CD4-positive, alpha-beta memory T cell (primary cell): ENCODE measurements at regions of chr17 and their contacts with region 1.

Region 1: DNA sequence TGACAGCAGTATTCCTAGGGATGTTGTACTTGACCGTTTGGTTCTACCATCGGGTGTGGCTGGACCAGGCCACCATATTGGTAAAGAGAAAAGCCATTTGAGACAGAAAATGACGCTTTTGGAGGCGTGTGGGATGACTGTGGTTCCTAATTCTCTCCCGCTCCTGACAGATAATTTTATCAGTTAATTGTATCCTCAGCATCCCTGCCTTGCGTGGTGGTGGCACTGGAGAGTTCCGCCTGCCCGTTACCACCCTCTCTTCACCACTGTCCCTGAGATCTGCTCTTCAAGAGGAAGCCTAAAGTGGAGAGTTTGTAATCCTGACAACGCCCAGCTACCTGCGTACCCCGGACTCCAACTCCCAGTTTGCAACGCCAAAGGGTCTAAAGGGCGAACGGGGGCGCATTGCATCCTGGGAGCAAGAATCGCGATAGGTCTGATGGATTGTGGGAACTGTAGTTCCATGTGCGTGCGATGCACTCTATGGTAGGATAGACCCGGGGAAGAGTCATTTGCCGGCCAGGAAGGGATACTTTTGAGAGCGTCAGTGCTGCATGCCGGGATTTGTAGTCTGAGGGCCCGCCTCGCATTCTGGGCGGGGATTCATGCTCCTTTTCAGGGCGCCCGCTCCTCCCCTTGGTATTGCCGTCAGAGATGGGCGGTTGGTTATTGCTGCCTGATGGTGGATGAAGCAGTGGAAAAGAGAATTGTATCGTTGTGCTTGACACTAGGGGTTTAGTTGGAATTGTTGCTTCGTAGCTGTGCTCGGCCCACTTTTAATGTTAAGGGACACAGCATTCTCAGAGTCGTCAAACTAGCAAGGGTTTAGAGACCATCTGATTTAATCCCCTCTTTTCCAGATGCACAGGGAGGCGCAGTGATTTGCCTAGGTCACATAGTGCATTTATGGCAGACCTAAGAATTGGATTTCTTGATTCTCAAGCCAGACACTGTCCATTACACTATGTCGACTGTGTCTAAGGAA is 965 bp upstream of the PHF12 start:
- DNase-seq: peak; percentile 94 to 99 (median 99)
- H3K4me3 ChIP-seq: peak overlapping the region; percentile 86 to 92
- H3K4me3 Mint-ChIP-seq: no peak overlapping the region
- H3K27ac ChIP-seq: peak overlapping the region; percentile 86
- H3K27ac Mint-ChIP-seq: no peak overlapping the region
- H3K4me1 ChIP-seq: peaks cover 29% of the 10 kb centered on the region
- H3K4me1 Mint-ChIP-seq: peaks cover 12 to 20% (median 18%) of the 10 kb centered on the region in 4 donors
- H3K27me3 ChIP-seq: no peaks in the 10 kb centered on the region
- H3K27me3 Mint-ChIP-seq: no peaks in the 10 kb centered on the region

Region 2: GRCh38 chr17:28710861-28711722 is 241.2 kb before region 1 on chr17:
- CTCF ChIA-PET with region 1: interaction called, 5 read pairs
- POLR2A ChIA-PET with region 1: interaction called, 22 read pairs
- intact Hi-C with region 1: no loop called
- DNase-seq: peak; percentile 85 to 88 (median 87)
- H3K4me3 ChIP-seq: peak overlapping the region; percentile 63 to 69
- H3K4me3 Mint-ChIP-seq: peak overlapping the region; percentile 91 to 95 (median 94)
- H3K27ac ChIP-seq: peak overlapping the region; percentile 85
- H3K27ac Mint-ChIP-seq: peak overlapping the region; percentile 92 to 97 (median 96)
- H3K4me1 ChIP-seq: peaks cover 13% of the 10 kb centered on the region
- H3K4me1 Mint-ChIP-seq: peaks cover 13 to 30% (median 20%) of the 10 kb centered on the region in 4 donors
- H3K27me3 ChIP-seq: peaks cover 7% of the 10 kb centered on the region
- H3K27me3 Mint-ChIP-seq: peaks cover 4 to 11% of the 10 kb centered on the region in 2 donors

Region 3: DNA sequence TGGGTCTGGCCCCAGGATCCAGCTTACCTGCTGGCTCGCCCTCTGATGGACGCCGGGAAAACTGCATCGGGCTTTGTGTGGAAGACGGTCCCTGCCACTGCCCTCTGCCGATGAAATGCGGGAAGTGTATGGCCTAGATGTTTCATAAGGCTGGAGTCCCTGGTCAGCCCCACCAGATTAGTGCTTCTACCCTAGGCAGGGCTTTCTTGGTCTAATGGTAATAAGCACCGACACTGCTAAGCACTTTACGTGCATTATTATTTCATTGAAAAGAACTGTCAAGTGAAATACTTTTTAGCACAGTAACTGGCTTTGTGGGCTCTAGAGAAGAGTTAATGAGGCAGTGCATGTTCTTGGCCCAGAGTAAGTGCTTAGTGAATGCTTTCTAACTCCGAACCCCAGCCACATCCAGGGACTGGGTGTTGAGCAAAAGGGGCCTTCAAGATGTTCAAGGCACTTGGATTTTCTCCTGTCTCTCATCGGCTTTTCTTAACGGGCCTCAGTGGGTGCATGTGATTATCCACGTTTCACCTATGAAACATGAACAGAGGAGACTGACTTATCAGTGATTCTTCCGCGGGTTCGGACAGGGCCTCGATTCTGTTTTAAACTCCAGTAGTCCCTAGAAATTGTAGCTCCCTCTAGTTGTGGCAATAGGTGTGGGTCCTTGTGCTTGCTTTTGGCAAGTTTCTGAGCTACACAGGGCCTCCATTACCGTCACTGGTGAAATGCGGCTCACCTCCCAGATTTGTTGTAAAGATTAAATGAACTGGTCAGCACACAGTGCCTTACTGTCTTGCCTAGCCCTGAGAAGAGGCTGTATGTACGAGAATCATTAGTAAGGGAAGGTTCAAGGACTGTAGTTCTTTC is 201.9 kb before region 1 on chr17:
- CTCF ChIA-PET with region 1: interaction called, 14 read pairs
- POLR2A ChIA-PET with region 1: interaction called, 13 read pairs
- intact Hi-C with region 1: no loop called
- DNase-seq: peak; percentile 82 to 89 (median 85)
- H3K4me3 ChIP-seq: no peak overlapping the region
- H3K4me3 Mint-ChIP-seq: peak overlapping the region in 1 of 8 donors; percentile 49
- H3K27ac ChIP-seq: peak overlapping the region; percentile 10
- H3K27ac Mint-ChIP-seq: peak overlapping the region in 6 of 7 donors; percentile 17 to 85 (median 70)
- H3K4me1 ChIP-seq: peaks cover 13% of the 10 kb centered on the region
- H3K4me1 Mint-ChIP-seq: peaks cover 7 to 18% (median 11%) of the 10 kb centered on the region in 4 donors
- H3K27me3 ChIP-seq: no peaks in the 10 kb centered on the region
- H3K27me3 Mint-ChIP-seq: no peaks in the 10 kb centered on the region

Region 4: DNA sequence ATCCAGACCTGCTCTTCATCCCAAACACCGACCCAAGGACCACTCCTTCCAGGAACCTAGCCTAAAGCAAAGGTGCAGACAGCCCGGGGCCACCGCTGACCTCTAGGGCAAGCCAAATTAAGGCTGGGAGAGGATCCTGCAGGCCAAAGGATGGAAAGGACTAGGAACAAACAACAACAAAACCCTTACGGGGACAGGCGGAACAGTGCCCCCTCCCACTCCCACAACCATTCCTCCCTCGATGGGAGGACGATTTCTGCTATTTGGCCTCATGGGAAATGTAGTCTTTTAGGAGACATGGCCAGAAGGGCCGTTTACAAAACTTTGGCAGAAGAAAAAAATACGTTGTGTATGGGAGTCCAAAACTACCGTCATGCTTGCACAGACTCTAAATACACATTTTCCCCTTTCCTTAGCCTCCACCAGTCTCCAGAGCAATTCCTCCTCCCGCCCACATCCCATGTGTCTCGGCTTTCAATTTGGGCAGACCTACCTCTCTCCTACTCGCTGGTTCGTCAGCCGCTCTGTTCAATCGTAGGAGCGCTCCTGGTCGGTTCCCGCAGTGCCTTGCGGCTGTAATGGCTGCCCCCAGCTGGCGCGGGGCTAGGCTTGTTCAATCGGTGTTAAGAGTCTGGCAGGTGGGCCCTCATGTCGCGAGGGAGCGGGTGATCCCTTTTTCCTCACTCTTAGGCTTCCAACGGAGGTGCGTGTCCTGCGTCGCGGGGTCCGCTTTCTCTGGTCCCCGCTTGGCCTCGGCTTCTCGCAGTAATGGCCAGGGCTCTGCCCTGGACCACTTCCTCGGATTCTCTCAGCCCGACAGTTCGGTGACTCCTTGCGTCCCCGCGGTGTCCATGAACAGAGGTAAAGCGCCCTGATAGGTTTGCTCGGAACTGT is 97.6 kb before region 1 on chr17 and contains the start of gene ERAL1:
- CTCF ChIA-PET with region 1: interaction called, 7 read pairs
- POLR2A ChIA-PET with region 1: no interaction called
- intact Hi-C with region 1: loop called (anchors 1 kb)
- DNase-seq: peak; percentile 82 to 90 (median 85)
- H3K4me3 ChIP-seq: peak within 1 kb of the TSS; percentile 88 to 91
- H3K4me3 Mint-ChIP-seq: peak within 1 kb of the TSS; percentile 90 to 98 (median 95)
- H3K27ac ChIP-seq: peak within 1 kb of the TSS; percentile 73
- H3K27ac Mint-ChIP-seq: peak within 1 kb of the TSS; percentile 82 to 96 (median 94)
- H3K4me1 ChIP-seq: peaks cover 13% of the 10 kb centered on the region
- H3K4me1 Mint-ChIP-seq: peaks cover 4 to 19% (median 11%) of the 10 kb centered on the region in 4 donors
- H3K27me3 ChIP-seq: no peaks in the 10 kb centered on the region
- H3K27me3 Mint-ChIP-seq: no peaks in the 10 kb centered on the region
- total RNA-seq, gene ERAL1: 23.5 to 24.3 TPM

Region 5: DNA sequence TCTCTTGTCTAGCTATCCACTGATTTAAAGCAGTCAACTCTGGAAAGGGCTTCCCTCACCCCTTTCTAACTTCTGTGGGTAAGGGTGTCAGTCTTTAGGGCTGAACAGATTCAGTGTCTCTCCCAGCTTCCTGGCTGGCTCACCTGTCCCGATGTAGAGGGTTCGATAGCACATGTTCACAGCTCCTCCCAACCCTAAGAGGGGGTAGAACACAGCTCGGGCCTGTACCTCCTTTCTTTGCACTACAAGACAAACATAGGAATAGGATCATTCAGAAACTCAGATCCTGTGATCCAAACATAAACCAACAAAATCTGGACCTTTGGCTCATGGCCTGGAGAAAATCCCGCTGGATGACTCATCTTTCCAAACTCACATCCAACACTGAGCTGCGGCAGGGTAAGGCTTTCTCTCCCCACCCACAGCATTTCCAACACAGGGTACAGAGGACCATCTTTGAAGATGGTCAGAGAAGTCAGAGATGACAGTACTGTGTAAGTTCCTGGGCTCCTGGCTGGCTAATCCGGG is 43.6 kb before region 1 on chr17:
- CTCF ChIA-PET with region 1: interaction called, 31 read pairs
- POLR2A ChIA-PET with region 1: interaction called, 193 read pairs
- intact Hi-C with region 1: loop called (anchors 1 kb)
- DNase-seq: no peak
- H3K4me3 ChIP-seq: no peak overlapping the region
- H3K4me3 Mint-ChIP-seq: peak overlapping the region in 1 of 8 donors; percentile 38
- H3K27ac ChIP-seq: no peak overlapping the region
- H3K27ac Mint-ChIP-seq: peak overlapping the region in 3 of 7 donors; percentile 15 to 55 (median 42)
- H3K4me1 ChIP-seq: no peaks in the 10 kb centered on the region
- H3K4me1 Mint-ChIP-seq: peaks cover 0 to 5% (median 1%) of the 10 kb centered on the region in 4 donors
- H3K27me3 ChIP-seq: no peaks in the 10 kb centered on the region
- H3K27me3 Mint-ChIP-seq: no peaks in the 10 kb centered on the region

Region 6: DNA sequence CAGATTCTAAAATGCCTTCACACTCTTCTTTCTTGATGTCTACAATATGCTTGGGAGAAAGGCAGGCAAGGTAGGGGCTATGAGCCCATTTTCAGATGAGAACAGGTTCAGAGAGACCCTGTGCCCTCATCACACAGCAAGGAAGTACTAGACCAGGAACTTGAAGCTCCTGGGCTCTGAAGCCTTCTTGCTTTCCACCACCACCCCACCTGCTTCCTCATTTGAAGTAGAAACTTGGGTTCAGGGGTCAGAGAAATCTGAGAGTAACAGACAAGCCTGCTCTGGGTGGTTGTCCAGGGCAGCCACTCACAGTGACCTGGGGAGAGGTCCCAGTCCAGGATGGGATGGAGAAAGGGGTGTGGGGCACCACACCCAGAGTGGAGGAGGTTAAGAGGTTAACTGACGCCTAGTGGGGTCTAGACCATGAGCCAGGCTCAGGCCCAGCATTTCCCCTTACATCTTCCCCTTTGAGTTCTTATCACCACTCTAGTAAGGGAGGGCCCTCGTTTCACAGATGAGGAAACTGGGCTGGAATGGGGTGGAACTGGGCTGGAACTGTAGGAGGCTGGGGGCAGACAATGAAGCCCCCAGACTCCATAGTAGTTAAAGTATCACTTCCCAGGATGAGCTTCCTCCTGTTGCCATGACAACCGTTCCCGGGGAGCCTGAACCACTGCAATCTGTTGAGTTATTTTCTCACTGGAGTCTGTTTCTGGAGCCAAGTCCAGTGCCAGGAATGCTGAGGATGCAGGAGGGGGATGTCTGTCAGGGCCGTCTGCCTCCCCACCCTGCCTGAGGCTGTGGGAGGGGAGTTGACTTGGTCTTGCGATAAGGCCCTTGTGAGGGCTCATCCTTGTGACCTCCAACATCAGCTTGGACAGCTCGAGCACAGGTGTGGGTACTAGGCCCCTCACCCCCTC is 15.2 kb after region 1 on chr17:
- CTCF ChIA-PET with region 1: interaction called, 14 read pairs
- POLR2A ChIA-PET with region 1: interaction called, 3 read pairs
- intact Hi-C with region 1: no loop called
- DNase-seq: peak in 1 of 5 donors; percentile 25
- H3K4me3 ChIP-seq: no peak overlapping the region
- H3K4me3 Mint-ChIP-seq: no peak overlapping the region
- H3K27ac ChIP-seq: no peak overlapping the region
- H3K27ac Mint-ChIP-seq: peak overlapping the region in 2 of 7 donors; percentile 19 to 39
- H3K4me1 ChIP-seq: no peaks in the 10 kb centered on the region
- H3K4me1 Mint-ChIP-seq: peaks cover 0 to 3% (median 0%) of the 10 kb centered on the region in 4 donors
- H3K27me3 ChIP-seq: no peaks in the 10 kb centered on the region
- H3K27me3 Mint-ChIP-seq: peaks cover 8 to 14% of the 10 kb centered on the region in 2 donors